ENCODE measurements at regions of chr10 and their contacts with region 1.

Region 1: GRCh38 chr10:35135861-35136260 is 9.2 kb downstream of the CREM start:
- DNase-seq: peak; percentile 38
- ATAC-seq: peak; percentile 28
- H3K4me3 Mint-ChIP-seq: peak overlapping the region; percentile 61
- H3K27ac Mint-ChIP-seq: peak overlapping the region; percentile 89
- H3K4me1 Mint-ChIP-seq: peaks cover 52% of the 10 kb centered on the region
- H3K27me3 Mint-ChIP-seq: no peaks in the 10 kb centered on the region

Region 2: GRCh38 chr10:35153716-35154479 is 18.0 kb after region 1 on chr10:
- CTCF ChIA-PET with region 1: interaction called, 14 read pairs
- POLR2A ChIA-PET with region 1: interaction called, 14 read pairs
- DNase-seq: no peak
- ATAC-seq: no peak
- H3K4me3 Mint-ChIP-seq: no peak overlapping the region
- H3K27ac Mint-ChIP-seq: peak overlapping the region; percentile 24
- H3K4me1 Mint-ChIP-seq: peaks cover 46% of the 10 kb centered on the region
- H3K27me3 Mint-ChIP-seq: no peaks in the 10 kb centered on the region

Region 3: GRCh38 chr10:35218339-35218955 is 82.6 kb after region 1 on chr10:
- CTCF ChIA-PET with region 1: interaction called, 10 read pairs
- POLR2A ChIA-PET with region 1: no interaction called
- DNase-seq: peak; percentile 93
- ATAC-seq: peak; percentile 81
- H3K4me3 Mint-ChIP-seq: no peak overlapping the region
- H3K27ac Mint-ChIP-seq: peak overlapping the region; percentile 85
- H3K4me1 Mint-ChIP-seq: peaks cover 40% of the 10 kb centered on the region
- H3K27me3 Mint-ChIP-seq: no peaks in the 10 kb centered on the region

Region 4: DNA sequence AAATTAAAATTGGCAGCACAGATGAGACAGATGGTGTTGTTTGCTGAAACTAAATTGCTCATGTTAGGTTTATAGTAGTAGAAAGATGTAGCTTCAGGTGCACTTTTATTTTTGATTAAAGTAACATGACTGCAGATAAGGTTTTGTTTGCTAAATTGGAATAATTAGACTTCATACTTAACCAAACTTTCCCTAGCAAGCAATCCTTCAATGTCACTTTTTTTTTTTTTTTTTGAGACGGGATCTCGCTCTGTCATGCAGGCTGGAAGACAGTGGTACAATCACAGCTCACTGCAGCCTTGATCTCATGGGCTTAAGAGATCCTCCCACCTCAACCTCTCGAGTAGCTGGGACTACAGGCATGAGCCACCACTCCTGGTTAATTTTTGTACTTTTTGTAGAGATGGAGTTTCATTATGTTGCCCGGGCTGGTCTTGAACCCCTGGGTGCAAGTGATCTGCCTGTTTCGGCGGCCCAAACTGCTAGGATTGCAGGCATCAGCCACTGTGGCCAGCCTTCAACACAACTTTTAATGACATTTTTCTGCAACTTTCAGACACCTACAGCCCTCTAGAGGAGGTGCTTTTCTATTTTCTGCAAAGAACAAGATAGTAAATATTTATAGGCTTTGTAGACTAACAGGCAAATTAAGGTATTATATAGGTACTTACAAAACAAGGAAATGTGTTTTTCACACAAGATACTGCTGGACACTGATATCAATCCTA is 115.7 kb after region 1 on chr10:
- CTCF ChIA-PET with region 1: no interaction called
- POLR2A ChIA-PET with region 1: no interaction called
- DNase-seq: no peak
- ATAC-seq: no peak
- H3K4me3 Mint-ChIP-seq: no peak overlapping the region
- H3K27ac Mint-ChIP-seq: no peak overlapping the region
- H3K4me1 Mint-ChIP-seq: no peaks in the 10 kb centered on the region
- H3K27me3 Mint-ChIP-seq: no peaks in the 10 kb centered on the region

Region 5: GRCh38 chr10:35262436-35262835 is 126.6 kb after region 1 on chr10:
- CTCF ChIA-PET with region 1: no interaction called
- POLR2A ChIA-PET with region 1: no interaction called
- DNase-seq: no peak
- ATAC-seq: no peak
- H3K4me3 Mint-ChIP-seq: no peak overlapping the region
- H3K27ac Mint-ChIP-seq: no peak overlapping the region
- H3K4me1 Mint-ChIP-seq: no peaks in the 10 kb centered on the region
- H3K27me3 Mint-ChIP-seq: peaks cover 1% of the 10 kb centered on the region

Measured in activated CD8-positive, alpha-beta T cell treated with anti-CD3 and anti-CD28 coated beads, Interleukin-2, amount 10 ng/mL, durations not matched to agents 7 days and 5 days (primary cell).